ENCODE measurements at regions of chr20 and their contacts with region 1.

Region 1: GRCh38 chr20:21505161-21505809 is 8.6 kb downstream of the NKX2-2 start:
- DNase-seq: peak; percentile 45
- H3K4me3 ChIP-seq: no peak overlapping the region
- H3K27ac ChIP-seq: no peak overlapping the region
- H3K4me1 ChIP-seq: peaks cover 4% of the 10 kb centered on the region
- H3K27me3 ChIP-seq: peaks cover 40 to 45% of the 10 kb centered on the region in 2 experiments
- CTCF ChIP-seq: peak; percentile 93 to 96
- POLR2A ChIP-seq: no peak

Region 2: DNA sequence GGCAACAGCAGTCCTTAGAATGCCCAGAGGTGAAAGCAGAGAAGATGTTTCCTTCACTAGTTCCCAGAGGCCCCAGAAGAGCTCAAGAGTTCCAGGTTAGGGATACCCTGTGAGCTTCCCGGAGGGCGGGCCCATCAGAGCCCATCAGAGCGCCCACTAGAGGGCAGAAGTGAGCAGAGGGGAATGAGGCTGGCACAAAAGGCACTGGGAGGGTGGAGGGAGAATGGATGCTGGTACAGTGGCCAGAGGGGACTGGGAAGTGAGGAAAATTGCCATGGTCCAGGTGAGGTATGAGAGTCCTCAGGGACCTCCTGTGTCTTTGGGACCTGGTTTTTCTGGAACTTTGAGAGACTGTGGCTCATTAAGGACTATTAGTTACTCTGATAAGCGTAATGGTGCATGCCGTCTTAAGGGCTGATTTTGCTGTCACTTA is 456.4 kb before region 1 on chr20:
- CTCF ChIA-PET with region 1: interaction called, 60 read pairs
- POLR2A ChIA-PET with region 1: no interaction called
- dilution Hi-C with region 1: no loop called
- intact Hi-C with region 1: loop called (anchors 1 kb)
- DNase-seq: peak; percentile 10
- H3K4me3 ChIP-seq: no peak overlapping the region
- H3K27ac ChIP-seq: no peak overlapping the region
- H3K4me1 ChIP-seq: no peaks in the 10 kb centered on the region
- H3K27me3 ChIP-seq: peaks cover 0 to 2% of the 10 kb centered on the region in 2 experiments
- CTCF ChIP-seq: peak; percentile 73 to 81
- POLR2A ChIP-seq: no peak

Region 3: DNA sequence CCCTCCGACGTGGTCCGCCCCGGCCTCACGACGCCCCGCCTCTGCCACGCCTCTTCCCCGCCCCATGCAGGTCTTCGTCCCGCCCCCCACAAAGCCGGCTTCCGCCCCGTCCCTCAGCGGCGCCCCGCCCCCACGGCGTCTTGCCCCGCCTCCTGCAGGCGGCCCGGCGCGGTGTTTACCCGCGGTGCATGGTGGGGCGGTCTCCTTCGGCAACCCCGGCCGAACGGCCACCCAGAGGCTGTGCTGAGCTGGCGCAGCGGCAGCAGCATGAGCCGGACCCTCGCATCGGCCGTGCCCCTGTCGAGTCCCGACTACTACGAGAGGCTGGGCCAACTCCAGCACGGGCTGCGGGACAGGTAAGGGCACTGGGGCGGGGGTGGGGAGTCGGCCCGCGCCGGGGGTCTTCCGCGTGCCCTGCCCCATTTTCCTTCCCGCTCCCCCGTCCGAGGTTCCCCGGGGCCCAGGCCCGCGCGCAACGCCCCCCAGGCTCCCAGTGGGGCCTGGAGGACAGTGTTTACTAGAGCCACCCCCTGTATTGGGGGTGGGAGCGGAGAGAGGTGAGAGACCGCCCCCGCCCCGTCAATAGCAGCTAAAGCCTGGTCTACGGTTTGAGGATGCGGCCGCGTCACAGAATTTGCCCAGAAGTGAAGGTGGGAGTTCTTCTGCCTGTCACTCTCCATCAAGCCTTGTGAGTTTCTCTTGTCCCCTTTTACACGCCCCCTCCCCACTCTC is 379.3 kb before region 1 on chr20 and contains the start of gene KIZ:
- CTCF ChIA-PET with region 1: interaction called, 14 read pairs
- POLR2A ChIA-PET with region 1: no interaction called
- dilution Hi-C with region 1: no loop called
- intact Hi-C with region 1: loop called (anchors 2 kb)
- DNase-seq: peak; percentile 97
- H3K4me3 ChIP-seq: peak within 1 kb of the TSS; percentile 57 to 97 (median 83)
- H3K27ac ChIP-seq: no peak within 1 kb of the TSS
- H3K4me1 ChIP-seq: peaks cover 13% of the 10 kb centered on the region
- H3K27me3 ChIP-seq: peaks cover 0 to 4% of the 10 kb centered on the region in 2 experiments
- CTCF ChIP-seq: peak in 1 of 2 donors; percentile 45
- POLR2A ChIP-seq: peak; percentile 62
- total RNA-seq, gene KIZ: 7.3 and 9.6 TPM in 2 replicates

Region 4: DNA sequence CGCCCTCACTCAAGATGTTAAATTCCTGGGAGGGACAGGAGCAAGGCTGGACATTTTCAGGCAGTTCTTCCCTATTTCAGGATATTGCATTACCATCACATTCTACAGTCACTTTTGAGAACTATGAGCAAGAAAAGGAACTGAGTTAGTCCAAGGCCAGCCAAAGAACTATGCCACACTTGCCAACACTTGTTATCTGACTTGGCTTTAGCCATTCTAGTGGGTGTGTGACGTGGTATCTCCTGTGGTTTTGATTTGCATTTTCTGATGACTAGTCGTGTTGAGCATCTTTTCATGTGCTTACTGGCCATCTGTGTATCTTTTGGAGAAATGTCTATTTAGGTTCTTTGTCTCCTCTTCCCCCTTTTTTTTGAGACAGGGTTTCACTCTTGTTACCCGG is 190.1 kb before region 1 on chr20:
- CTCF ChIA-PET with region 1: no interaction called
- POLR2A ChIA-PET with region 1: no interaction called
- dilution Hi-C with region 1: no loop called
- intact Hi-C with region 1: no loop called
- DNase-seq: no peak
- H3K4me3 ChIP-seq: no peak overlapping the region
- H3K27ac ChIP-seq: no peak overlapping the region
- H3K4me1 ChIP-seq: peaks cover 3% of the 10 kb centered on the region
- H3K27me3 ChIP-seq: no peaks in the 10 kb centered on the region
- CTCF ChIP-seq: no peak
- POLR2A ChIP-seq: no peak

Region 5: DNA sequence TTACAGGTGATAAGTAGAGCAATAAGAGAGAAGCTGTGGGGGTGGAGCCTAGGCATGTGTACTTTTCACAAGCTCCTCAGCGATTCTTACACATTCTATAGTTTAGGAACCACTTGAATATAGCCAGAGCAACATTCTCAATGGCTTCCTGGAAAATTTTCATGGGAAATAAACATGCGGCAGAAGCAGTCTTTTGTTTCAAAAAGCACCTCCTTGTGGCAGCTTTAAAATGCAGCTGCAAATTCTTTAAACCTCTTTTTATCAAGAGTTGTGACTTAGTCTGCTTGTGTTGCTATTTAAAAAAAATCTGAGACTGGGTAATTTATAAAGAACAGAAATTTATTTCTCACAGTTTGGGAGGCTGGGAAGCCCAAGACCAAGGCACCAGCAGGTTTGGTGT is 15.2 kb before region 1 on chr20:
- CTCF ChIA-PET with region 1: interaction called, 24 read pairs
- POLR2A ChIA-PET with region 1: no interaction called
- dilution Hi-C with region 1: no loop called
- intact Hi-C with region 1: no loop called
- DNase-seq: peak; percentile 25
- H3K4me3 ChIP-seq: no peak overlapping the region
- H3K27ac ChIP-seq: no peak overlapping the region
- H3K4me1 ChIP-seq: no peaks in the 10 kb centered on the region
- H3K27me3 ChIP-seq: peaks cover 6 to 8% of the 10 kb centered on the region in 2 experiments
- CTCF ChIP-seq: no peak
- POLR2A ChIP-seq: no peak

Region 6: DNA sequence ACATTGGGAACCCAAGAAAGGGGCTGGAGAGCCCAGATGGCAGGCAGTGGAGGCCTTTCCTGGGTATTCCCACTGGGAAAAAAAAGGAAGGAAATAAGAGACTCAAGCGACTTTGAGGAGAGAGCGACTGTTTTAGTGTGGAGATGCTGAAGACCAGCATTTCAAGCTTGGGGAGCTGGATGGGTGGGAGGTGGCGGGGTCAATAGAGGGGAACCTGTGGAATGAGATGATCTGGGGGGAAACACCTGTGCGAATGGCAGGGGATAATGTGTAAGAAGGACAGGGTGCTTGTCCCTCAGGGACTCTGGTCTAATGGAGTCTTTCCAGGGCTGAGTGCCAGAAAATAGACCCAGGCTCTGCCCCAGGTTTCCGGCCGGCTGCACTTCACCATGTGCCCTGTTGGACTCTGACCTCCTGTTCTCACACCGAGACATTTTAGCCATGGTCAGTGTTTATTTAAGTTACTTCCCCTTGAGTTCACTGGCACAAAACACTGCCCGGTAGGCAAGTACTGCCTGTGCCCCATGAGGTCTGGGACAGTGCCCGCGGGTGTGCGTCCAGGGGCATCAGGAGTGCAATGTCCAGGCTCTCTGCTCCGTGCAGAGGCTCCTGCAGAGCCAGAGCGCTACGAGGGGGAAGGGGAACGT is 59.0 kb after region 1 on chr20:
- CTCF ChIA-PET with region 1: no interaction called
- POLR2A ChIA-PET with region 1: no interaction called
- dilution Hi-C with region 1: no loop called
- intact Hi-C with region 1: no loop called
- DNase-seq: no peak
- H3K4me3 ChIP-seq: no peak overlapping the region
- H3K27ac ChIP-seq: no peak overlapping the region
- H3K4me1 ChIP-seq: no peaks in the 10 kb centered on the region
- H3K27me3 ChIP-seq: no peaks in the 10 kb centered on the region
- CTCF ChIP-seq: no peak
- POLR2A ChIP-seq: no peak

Region 7: GRCh38 chr20:21725892-21726291 is 220.6 kb after region 1 on chr20:
- CTCF ChIA-PET with region 1: no interaction called
- POLR2A ChIA-PET with region 1: no interaction called
- dilution Hi-C with region 1: no loop called
- intact Hi-C with region 1: no loop called
- DNase-seq: no peak
- H3K4me3 ChIP-seq: no peak overlapping the region
- H3K27ac ChIP-seq: no peak overlapping the region
- H3K4me1 ChIP-seq: no peaks in the 10 kb centered on the region
- H3K27me3 ChIP-seq: no peaks in the 10 kb centered on the region
- CTCF ChIP-seq: no peak
- POLR2A ChIP-seq: no peak